ENCODE measurements at regions of chr14 and their contacts with region 1.

Region 1: DNA sequence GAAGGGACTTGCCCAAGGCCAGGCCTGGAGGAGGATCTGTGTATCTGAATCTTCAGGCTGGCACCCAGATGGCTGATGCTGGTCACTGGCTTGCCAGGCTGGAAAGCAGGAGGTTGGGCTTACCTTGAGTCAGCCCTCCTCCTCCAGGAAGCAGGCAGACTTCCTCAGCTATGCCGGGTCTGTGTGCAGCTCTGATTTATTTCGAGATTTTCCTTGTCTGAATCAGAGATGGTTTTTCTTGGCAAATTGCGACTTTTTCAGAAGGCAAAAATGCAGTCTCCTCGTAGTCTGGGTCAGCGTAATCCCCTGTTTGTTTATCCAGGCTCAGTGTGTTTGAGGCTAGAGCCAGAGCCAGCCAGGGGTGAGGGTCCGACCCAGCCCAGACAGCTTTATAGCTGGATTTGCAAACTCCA is 48.9 kb downstream of the SMOC1 start:
- DNase-seq: peak; percentile 89
- ATAC-seq: peak; percentile 87
- H3K4me3 ChIP-seq: no peak overlapping the region
- H3K27ac ChIP-seq: peak overlapping the region; percentile 67
- H3K4me1 ChIP-seq: peaks cover 18% of the 10 kb centered on the region
- H3K27me3 ChIP-seq: no peaks in the 10 kb centered on the region
- CTCF ChIP-seq: no peak
- POLR2A ChIP-seq: no peak
- RAD21 ChIP-seq: no peak

Region 2: GRCh38 chr14:69005432-69006147 is 922.5 kb before region 1 on chr14:
- CTCF ChIA-PET with region 1: no interaction called
- POLR2A ChIA-PET with region 1: no interaction called
- dilution Hi-C with region 1: no loop called
- in situ Hi-C with region 1: no loop called
- intact Hi-C with region 1: no loop called
- DNase-seq: peak; percentile 94
- ATAC-seq: peak; percentile 78
- H3K4me3 ChIP-seq: no peak overlapping the region
- H3K27ac ChIP-seq: peak overlapping the region; percentile 8; the same call in 1 of the 2 replicates
- H3K4me1 ChIP-seq: peaks cover 20% of the 10 kb centered on the region
- H3K27me3 ChIP-seq: no peaks in the 10 kb centered on the region
- CTCF ChIP-seq: no peak
- POLR2A ChIP-seq: peak; percentile 47; the same call in 1 of the 2 replicates
- RAD21 ChIP-seq: peak; percentile 23; the same call in 1 of the 2 replicates

Region 3: GRCh38 chr14:69605738-69606137 is 322.4 kb before region 1 on chr14:
- CTCF ChIA-PET with region 1: no interaction called
- POLR2A ChIA-PET with region 1: no interaction called
- dilution Hi-C with region 1: no loop called
- in situ Hi-C with region 1: no loop called
- intact Hi-C with region 1: no loop called
- DNase-seq: no peak
- ATAC-seq: no peak
- H3K4me3 ChIP-seq: no peak overlapping the region
- H3K27ac ChIP-seq: no peak overlapping the region
- H3K4me1 ChIP-seq: peaks cover 15% of the 10 kb centered on the region
- H3K27me3 ChIP-seq: no peaks in the 10 kb centered on the region; the same call in 1 of the 2 replicates
- CTCF ChIP-seq: no peak
- POLR2A ChIP-seq: no peak
- RAD21 ChIP-seq: no peak

Region 4: DNA sequence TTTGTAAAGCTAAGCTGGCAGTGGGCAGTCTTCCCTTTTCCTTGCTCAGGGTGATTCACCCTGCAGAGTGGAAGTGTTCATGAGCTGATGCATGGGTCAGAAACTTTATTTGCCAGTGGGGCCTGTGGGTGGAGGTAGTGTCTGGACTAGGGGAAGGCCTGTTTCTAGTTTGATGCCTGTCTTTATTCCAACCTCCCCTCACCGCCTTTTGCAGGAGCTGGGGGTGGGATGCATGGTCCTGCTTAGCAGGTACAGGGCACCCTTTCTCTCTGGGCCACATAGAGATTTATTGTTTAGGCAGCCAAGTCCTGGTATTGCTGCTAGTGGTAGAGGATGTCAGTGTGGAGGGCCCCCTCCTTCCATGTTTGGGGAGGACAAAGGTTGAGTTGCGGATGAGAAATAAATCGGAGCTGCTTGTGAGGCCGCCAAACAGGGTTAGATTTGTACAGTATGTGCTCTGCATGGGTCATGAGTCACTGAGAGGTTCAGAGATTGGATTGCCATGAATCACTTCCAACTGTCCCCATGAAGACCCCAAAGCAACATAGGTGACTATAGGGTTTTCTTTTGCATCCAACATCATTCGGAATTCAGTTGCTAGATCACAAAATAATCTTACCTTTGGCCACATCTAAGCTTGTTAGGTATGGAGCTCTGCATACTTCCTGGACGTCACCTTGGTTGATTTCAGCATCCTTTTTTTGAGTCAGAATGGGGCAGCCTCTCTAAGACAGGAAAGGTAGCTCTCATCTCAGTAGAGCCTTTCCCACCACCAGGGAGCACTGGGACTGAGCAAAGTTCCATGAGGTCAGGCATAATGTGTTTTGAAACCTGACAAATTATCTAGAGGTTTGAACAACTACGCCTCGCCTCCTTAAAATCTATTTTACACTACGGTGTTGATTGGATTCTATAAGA is 40.1 kb before region 1 on chr14:
- CTCF ChIA-PET with region 1: interaction called, 3 read pairs
- POLR2A ChIA-PET with region 1: no interaction called
- dilution Hi-C with region 1: no loop called
- in situ Hi-C with region 1: no loop called
- intact Hi-C with region 1: loop called (anchors 5 kb)
- DNase-seq: peak; percentile 71
- ATAC-seq: peak; percentile 70
- H3K4me3 ChIP-seq: no peak overlapping the region
- H3K27ac ChIP-seq: peak overlapping the region; percentile 36; the same call in 1 of the 2 replicates
- H3K4me1 ChIP-seq: peaks cover 14% of the 10 kb centered on the region
- H3K27me3 ChIP-seq: no peaks in the 10 kb centered on the region
- CTCF ChIP-seq: no peak
- POLR2A ChIP-seq: no peak
- RAD21 ChIP-seq: peak; percentile 2; the same call in 1 of the 2 replicates

Region 5: GRCh38 chr14:69968681-69969080 is 40.6 kb after region 1 on chr14:
- CTCF ChIA-PET with region 1: no interaction called
- POLR2A ChIA-PET with region 1: no interaction called
- dilution Hi-C with region 1: no loop called
- in situ Hi-C with region 1: no loop called
- intact Hi-C with region 1: loop called (anchors 5 kb)
- DNase-seq: no peak
- ATAC-seq: no peak
- H3K4me3 ChIP-seq: no peak overlapping the region
- H3K27ac ChIP-seq: no peak overlapping the region
- H3K4me1 ChIP-seq: peaks cover 7% of the 10 kb centered on the region; the same call in 1 of the 2 replicates
- H3K27me3 ChIP-seq: no peaks in the 10 kb centered on the region
- CTCF ChIP-seq: no peak
- POLR2A ChIP-seq: no peak
- RAD21 ChIP-seq: no peak

Region 6: DNA sequence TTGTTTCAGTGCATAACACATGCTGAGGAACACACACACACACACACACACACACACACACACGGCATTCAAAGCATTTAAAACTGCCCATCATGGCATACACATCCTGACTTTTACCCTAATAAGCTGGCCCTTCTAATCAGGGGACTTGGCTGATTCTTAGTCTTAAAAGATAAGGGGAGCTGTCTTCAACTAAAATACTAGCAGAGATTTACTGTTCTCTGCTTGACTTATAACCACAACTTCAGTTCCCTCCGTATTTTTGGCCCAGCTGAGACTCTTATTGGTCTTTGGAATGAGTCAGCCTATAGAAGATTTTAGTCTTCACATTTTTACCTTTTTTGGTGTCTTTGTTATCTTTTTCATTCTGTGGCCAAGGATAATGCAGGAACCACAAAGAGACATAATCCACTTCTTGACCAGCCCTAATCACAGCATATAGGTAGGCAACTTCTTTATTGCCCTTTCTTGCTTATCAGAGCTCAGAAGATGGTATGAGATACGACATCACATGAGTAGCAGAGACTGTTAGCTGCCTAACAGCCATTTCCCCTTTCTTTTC is 285.7 kb after region 1 on chr14:
- CTCF ChIA-PET with region 1: no interaction called
- POLR2A ChIA-PET with region 1: no interaction called
- dilution Hi-C with region 1: no loop called
- in situ Hi-C with region 1: no loop called
- intact Hi-C with region 1: no loop called
- DNase-seq: no peak
- ATAC-seq: no peak
- H3K4me3 ChIP-seq: no peak overlapping the region
- H3K27ac ChIP-seq: no peak overlapping the region
- H3K4me1 ChIP-seq: no peaks in the 10 kb centered on the region
- H3K27me3 ChIP-seq: no peaks in the 10 kb centered on the region
- CTCF ChIP-seq: no peak
- POLR2A ChIP-seq: no peak
- RAD21 ChIP-seq: no peak